B cell (primary cell): ENCODE measurements at regions of chr12 and their contacts with region 1.

Region 1: GRCh38 chr12:94101738-94102660 is 46.4 kb upstream of the PLXNC1 start:
- DNase-seq: peak; percentile 90
- ATAC-seq: peak; percentile 84
- H3K4me3 ChIP-seq: peak overlapping the region; percentile 51 to 94 (median 65)
- H3K4me3 Mint-ChIP-seq: peak overlapping the region; percentile 91
- H3K27ac ChIP-seq: no peak overlapping the region
- H3K27ac Mint-ChIP-seq: peak overlapping the region; percentile 50
- H3K4me1 ChIP-seq: peaks cover 4 to 14% of the 10 kb centered on the region in 2 donors
- H3K4me1 Mint-ChIP-seq: peaks cover 10% of the 10 kb centered on the region
- H3K27me3 ChIP-seq: peaks cover 0 to 31% (median 11%) of the 10 kb centered on the region in 4 experiments
- H3K27me3 Mint-ChIP-seq: peaks cover 52% of the 10 kb centered on the region
- CTCF ChIP-seq: peak; percentile 78

Region 2: DNA sequence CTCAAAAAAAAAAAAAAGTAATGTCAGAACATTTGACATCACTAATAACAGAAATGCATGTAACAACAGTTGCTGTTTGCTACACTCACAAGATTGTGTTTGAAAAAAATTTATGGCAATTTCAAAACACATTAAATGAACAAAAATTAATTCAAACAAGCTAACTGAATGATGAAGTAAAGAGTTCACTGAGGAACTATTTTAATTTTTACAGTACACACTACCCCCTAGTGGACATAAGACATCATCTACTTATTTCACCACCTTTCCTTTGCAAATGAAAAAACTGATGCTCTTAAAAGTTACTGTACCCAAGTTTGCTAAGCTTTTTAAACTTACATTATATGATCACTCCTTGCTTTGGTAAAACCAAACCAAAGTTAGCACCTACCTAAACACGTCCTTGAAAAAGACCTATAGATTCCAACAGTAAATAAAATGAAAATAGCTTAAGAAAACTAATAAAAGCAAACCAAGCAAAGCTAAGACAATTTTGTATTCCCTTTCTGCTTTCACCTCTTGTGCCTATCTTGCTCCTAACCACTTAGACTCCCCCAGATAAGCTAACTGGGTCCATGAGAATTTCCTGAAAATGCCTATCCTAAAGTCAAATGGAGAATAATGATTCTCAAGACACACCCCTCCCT is 682.5 kb before region 1 on chr12:
- CTCF ChIA-PET with region 1: interaction called, 26 read pairs
- POLR2A ChIA-PET with region 1: no interaction called
- intact Hi-C with region 1: no loop called
- DNase-seq: peak; percentile 72
- ATAC-seq: peak; percentile 74
- H3K4me3 ChIP-seq: no peak overlapping the region
- H3K4me3 Mint-ChIP-seq: peak overlapping the region; percentile 29
- H3K27ac ChIP-seq: peak overlapping the region in 1 of 2 donors; percentile 8
- H3K27ac Mint-ChIP-seq: peak overlapping the region; percentile 23
- H3K4me1 ChIP-seq: peaks cover 38 to 60% of the 10 kb centered on the region in 2 donors
- H3K4me1 Mint-ChIP-seq: peaks cover 83% of the 10 kb centered on the region
- H3K27me3 ChIP-seq: no peaks in the 10 kb centered on the region
- H3K27me3 Mint-ChIP-seq: no peaks in the 10 kb centered on the region
- CTCF ChIP-seq: peak; percentile 78

Region 3: GRCh38 chr12:93526786-93527428 is 575.1 kb before region 1 on chr12:
- CTCF ChIA-PET with region 1: interaction called, 33 read pairs
- POLR2A ChIA-PET with region 1: no interaction called
- intact Hi-C with region 1: no loop called
- DNase-seq: no peak
- ATAC-seq: no peak
- H3K4me3 ChIP-seq: no peak overlapping the region
- H3K4me3 Mint-ChIP-seq: no peak overlapping the region
- H3K27ac ChIP-seq: no peak overlapping the region
- H3K27ac Mint-ChIP-seq: no peak overlapping the region
- H3K4me1 ChIP-seq: no peaks in the 10 kb centered on the region
- H3K4me1 Mint-ChIP-seq: peaks cover 3% of the 10 kb centered on the region
- H3K27me3 ChIP-seq: peaks cover 0 to 4% (median 0%) of the 10 kb centered on the region in 4 experiments
- H3K27me3 Mint-ChIP-seq: peaks cover 22% of the 10 kb centered on the region
- CTCF ChIP-seq: no peak

Region 4: DNA sequence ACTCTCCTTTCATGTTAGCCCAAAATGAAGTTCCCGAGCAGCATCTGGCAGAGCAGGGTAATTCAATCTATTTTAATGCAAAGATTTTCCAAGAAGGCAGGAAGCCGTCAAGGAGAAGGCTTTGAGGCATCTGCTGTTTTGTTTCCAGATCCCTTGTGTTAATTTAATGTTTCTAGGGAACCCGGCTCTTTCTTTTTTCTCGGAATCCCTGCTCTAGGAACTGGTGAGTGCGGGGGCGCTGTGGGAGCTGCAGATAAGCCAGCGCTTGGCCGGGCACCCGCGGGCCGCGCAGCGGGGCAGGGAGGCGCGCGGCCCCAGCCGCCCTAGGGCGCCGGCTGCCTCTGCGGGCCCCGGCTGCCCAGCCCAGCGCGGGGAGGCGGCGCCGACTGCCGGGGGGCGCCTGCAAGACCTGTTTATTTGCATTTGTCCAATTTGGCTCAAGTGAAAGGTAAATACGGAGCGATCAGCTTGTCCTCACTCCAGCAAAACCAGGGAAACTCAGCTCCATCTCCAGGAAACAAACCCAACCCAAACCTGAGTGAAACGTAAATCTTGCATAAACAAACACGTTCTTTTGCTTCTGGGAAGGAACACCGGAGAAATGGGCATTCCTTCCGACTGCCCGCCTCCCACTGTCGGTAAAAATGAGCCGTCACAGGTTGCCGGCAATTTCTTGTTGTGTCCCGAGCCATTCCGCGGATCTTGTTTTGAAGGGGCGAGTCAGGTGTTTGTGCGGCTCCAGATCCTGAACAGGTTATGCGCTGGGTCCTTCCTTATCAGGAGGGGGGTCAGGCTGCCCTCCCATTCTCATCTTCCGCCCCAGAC is 359.7 kb before region 1 on chr12:
- CTCF ChIA-PET with region 1: interaction called, 27 read pairs
- POLR2A ChIA-PET with region 1: no interaction called
- intact Hi-C with region 1: loop called (anchors 1 kb)
- DNase-seq: peak; percentile 73
- ATAC-seq: peak; percentile 94
- H3K4me3 ChIP-seq: peak overlapping the region; percentile 59 to 93 (median 86)
- H3K4me3 Mint-ChIP-seq: peak overlapping the region; percentile 92
- H3K27ac ChIP-seq: peak overlapping the region; percentile 48 to 68
- H3K27ac Mint-ChIP-seq: peak overlapping the region; percentile 78
- H3K4me1 ChIP-seq: peaks cover 8 to 15% of the 10 kb centered on the region in 2 donors
- H3K4me1 Mint-ChIP-seq: peaks cover 29% of the 10 kb centered on the region
- H3K27me3 ChIP-seq: no peaks in the 10 kb centered on the region
- H3K27me3 Mint-ChIP-seq: no peaks in the 10 kb centered on the region
- CTCF ChIP-seq: peak; percentile 26

Region 5: DNA sequence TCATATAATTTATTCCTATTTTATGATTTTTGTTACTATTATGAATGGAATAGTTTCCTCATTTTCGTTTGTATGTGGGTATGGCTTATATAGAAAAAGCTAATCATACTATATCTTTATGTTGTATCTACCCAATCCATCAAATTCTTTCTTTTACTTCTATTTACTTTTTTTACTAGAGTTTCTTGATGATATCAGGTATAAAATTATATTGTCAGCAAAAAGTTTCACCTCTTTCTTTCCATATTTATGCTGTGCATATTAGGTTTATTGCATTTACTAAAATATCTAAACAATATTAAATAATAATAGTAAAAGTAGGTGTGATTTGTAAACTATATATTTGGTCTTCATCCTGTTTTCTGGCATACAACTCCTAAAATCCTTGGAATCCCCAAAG is 100.3 kb before region 1 on chr12:
- CTCF ChIA-PET with region 1: no interaction called
- POLR2A ChIA-PET with region 1: no interaction called
- intact Hi-C with region 1: no loop called
- DNase-seq: no peak
- ATAC-seq: no peak
- H3K4me3 ChIP-seq: no peak overlapping the region
- H3K4me3 Mint-ChIP-seq: no peak overlapping the region
- H3K27ac ChIP-seq: no peak overlapping the region
- H3K27ac Mint-ChIP-seq: no peak overlapping the region
- H3K4me1 ChIP-seq: no peaks in the 10 kb centered on the region
- H3K4me1 Mint-ChIP-seq: no peaks in the 10 kb centered on the region
- H3K27me3 ChIP-seq: peaks cover 0 to 2% (median 0%) of the 10 kb centered on the region in 4 experiments
- H3K27me3 Mint-ChIP-seq: peaks cover 21% of the 10 kb centered on the region
- CTCF ChIP-seq: no peak

Region 6: GRCh38 chr12:94112132-94112531 is 10.1 kb after region 1 on chr12:
- CTCF ChIA-PET with region 1: interaction called, 17 read pairs
- POLR2A ChIA-PET with region 1: no interaction called
- intact Hi-C with region 1: no loop called
- DNase-seq: no peak
- ATAC-seq: no peak
- H3K4me3 ChIP-seq: no peak overlapping the region
- H3K4me3 Mint-ChIP-seq: no peak overlapping the region
- H3K27ac ChIP-seq: no peak overlapping the region
- H3K27ac Mint-ChIP-seq: no peak overlapping the region
- H3K4me1 ChIP-seq: no peaks in the 10 kb centered on the region
- H3K4me1 Mint-ChIP-seq: no peaks in the 10 kb centered on the region
- H3K27me3 ChIP-seq: no peaks in the 10 kb centered on the region
- H3K27me3 Mint-ChIP-seq: peaks cover 9% of the 10 kb centered on the region
- CTCF ChIP-seq: no peak

Region 7: DNA sequence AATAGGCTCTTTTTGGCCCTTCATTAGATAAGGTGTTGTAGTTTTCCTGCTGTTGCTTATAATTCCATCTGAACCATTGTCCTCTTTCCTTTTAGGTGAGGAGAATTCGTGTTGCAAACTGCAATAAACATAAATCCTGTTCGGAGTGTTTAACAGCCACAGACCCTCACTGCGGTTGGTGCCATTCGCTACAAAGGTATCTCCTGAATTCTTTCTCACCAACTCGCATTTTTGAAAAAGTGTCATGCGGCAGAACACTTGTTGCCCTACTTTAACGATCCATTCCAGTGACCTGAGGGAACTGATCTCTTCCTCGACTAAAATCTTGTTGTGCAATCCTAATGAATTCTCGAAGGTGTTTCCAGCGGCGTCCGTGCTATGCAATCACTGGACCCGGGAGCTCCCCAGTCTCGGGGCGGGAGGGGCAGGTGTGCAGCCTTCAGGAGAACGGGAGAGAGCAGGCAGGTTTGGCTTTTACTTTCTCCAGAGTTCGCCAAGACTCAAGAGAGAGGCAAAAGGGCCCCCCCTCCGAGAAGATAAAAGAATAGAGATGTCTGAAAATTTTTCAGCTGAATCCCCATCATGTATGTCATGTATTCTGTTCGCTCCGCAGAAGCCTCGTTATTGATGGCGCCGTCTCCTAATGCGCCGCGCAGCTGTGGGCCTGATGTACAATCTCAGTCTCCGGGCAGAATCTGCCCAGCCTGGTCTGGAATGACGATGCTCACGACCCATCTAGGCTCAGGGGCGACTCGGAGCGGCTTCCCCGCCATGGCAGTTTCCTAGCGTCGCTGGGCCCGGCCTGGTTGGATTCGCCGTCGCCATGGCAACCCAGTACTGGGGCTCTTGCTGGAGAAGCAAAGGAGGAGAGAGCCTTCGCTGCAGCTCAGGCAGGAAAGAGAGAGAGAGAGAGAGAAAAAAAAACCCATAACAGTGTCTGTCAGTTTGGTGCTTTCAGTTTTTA is 84.6 kb after region 1 on chr12:
- CTCF ChIA-PET with region 1: no interaction called
- POLR2A ChIA-PET with region 1: no interaction called
- intact Hi-C with region 1: no loop called
- DNase-seq: no peak
- ATAC-seq: no peak
- H3K4me3 ChIP-seq: no peak overlapping the region
- H3K4me3 Mint-ChIP-seq: no peak overlapping the region
- H3K27ac ChIP-seq: no peak overlapping the region
- H3K27ac Mint-ChIP-seq: no peak overlapping the region
- H3K4me1 ChIP-seq: no peaks in the 10 kb centered on the region
- H3K4me1 Mint-ChIP-seq: peaks cover 8% of the 10 kb centered on the region
- H3K27me3 ChIP-seq: no peaks in the 10 kb centered on the region
- H3K27me3 Mint-ChIP-seq: no peaks in the 10 kb centered on the region
- CTCF ChIP-seq: no peak